Activated B cell treated with CpG ODN at 0.5 μM for 24 hours (primary cell): ENCODE measurements at regions of chr16 and their contacts with region 1.

Region 1: GRCh38 chr16:25014500-25015147 is 545 bp downstream of the ARHGAP17 start:
- DNase-seq: peak; percentile 35
- ATAC-seq: peak; percentile 14
- H3K4me3 Mint-ChIP-seq: peak overlapping the region; percentile 92
- H3K27ac Mint-ChIP-seq: peak overlapping the region; percentile 85
- H3K4me1 Mint-ChIP-seq: peaks cover 86% of the 10 kb centered on the region
- H3K27me3 Mint-ChIP-seq: no peaks in the 10 kb centered on the region
- CTCF ChIP-seq: no peak

Region 2: DNA sequence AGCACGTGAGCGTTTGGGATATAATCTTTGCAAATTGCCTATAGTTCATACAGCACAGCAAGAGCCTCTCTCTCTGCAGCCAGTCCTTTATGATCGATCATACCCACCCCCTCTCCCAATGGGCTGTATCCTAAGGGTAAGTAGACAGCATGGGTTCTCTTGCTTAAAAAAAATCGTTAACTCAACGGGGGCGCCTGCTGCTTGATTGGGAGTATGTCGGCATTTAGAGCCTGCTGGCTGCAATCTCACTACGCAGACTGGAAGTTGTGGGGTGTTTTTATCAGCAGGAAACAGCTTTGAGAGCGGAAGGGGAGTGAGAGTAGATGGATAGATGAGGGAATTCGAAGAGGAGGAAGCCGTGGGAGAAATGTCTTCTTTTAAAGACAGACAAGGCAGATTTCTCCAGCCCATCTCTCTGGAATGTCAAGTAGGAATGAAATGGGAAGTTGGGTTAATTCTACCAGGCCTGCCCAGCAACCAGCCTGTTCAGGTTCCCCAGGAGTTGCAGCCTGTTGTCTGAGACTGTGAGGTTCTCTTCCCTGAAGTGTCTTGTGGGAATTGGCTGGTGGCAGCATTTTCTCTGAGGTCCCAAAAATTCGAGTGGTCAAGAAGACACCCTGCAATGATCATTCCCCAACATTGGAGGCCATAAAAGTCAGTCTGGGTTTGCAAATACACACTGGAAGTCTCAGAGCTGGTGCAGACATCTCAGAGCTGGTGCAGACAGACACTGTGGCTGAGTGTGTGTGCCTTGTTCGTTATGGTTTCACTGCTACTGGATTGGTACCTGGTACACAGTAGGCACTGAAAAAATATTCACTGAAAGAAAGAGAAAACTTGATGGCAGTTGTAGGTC is 1113.2 kb before region 1 on chr16:
- CTCF ChIA-PET with region 1: no interaction called
- POLR2A ChIA-PET with region 1: no interaction called
- intact Hi-C with region 1: no loop called
- DNase-seq: no peak
- ATAC-seq: no peak
- H3K4me3 Mint-ChIP-seq: peak overlapping the region; percentile 29
- H3K27ac Mint-ChIP-seq: peak overlapping the region; percentile 77
- H3K4me1 Mint-ChIP-seq: peaks cover 91% of the 10 kb centered on the region
- H3K27me3 Mint-ChIP-seq: no peaks in the 10 kb centered on the region
- CTCF ChIP-seq: no peak

Region 3: DNA sequence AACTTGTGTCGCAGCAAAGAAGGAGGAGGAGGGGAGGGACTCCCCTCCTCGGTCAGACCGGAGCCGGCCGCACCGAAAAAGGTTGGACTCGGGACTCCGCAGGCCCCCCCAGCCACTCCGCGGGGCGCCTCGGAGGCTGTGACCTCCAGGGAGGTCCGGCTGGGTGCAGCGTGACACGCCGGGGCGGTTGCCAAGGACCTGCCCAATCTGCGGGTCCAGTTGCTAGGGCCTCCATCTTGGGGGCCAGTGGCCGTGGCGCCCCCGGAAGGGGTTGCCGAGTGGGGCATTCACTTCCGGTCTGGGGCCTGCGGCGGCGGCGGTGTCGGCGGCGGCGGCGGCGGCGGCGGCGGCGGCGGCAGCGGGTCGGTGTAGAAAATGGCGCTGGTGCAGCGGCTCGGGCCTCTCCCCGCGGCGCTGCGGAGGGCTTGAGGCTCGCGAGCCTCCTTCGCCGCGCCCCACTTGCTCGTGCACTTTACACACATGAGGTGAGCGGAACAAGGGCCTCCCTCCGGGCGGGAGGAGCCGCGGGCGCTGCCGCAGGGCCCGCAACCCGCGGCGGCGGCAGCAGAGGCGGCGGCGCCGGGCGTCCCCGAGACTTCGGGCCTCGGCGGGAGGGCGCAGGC is 285.2 kb before region 1 on chr16 and contains the start of gene TNRC6A:
- CTCF ChIA-PET with region 1: no interaction called
- POLR2A ChIA-PET with region 1: no interaction called
- intact Hi-C with region 1: no loop called
- DNase-seq: peak; percentile 90
- ATAC-seq: peak; percentile 79
- H3K4me3 Mint-ChIP-seq: peak within 1 kb of the TSS; percentile 99
- H3K27ac Mint-ChIP-seq: peak within 1 kb of the TSS; percentile 97
- H3K4me1 Mint-ChIP-seq: peaks cover 38% of the 10 kb centered on the region
- H3K27me3 Mint-ChIP-seq: no peaks in the 10 kb centered on the region
- CTCF ChIP-seq: no peak
- total RNA-seq, gene TNRC6A: 57.9 and 68.5 TPM in 2 replicates

Region 4: DNA sequence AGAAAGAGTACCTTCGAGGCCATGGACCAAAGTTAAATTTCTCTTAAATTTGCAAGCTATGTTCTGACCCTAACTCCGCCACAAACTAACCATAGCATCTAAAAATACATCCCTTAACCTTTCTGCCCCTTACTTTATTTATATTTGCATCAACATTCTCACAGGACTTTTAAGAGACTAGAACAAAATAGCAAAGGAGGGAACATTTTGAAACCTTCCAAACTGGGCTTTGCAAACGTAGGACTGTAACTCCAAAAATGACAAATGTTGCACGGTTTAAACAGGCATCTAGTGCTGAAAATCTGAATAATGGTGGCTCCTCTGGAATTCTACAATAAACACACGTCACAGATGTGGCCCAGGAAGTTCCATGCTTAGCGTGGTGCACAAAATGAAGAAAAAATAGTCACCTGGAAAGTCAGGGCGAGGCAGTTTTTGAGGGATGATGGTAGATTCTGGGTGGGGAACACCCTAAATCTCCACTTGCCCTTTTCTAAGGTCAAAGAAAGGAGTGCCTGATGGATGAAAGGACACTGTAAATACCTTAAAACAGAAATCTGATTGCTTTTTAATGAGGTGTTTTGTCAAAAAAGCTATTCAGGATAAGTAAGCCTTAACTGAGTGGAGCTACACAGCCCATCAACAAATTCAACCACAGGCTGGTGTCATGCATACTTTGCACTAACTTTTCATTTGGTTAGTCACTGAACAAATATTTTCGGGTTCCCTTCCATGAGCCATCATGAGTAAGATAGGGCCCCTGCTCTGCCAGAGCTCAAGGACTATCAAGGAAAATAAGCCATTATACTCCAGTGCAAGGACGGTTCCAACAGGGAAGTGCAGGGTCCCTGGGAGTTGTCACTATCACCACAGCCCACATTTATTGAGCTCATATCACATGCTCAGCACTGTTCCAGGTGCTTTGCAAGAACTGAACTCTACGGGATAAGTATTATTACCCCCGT is 20.6 kb before region 1 on chr16:
- CTCF ChIA-PET with region 1: no interaction called
- POLR2A ChIA-PET with region 1: interaction called, 13 read pairs
- intact Hi-C with region 1: loop called (anchors 1 kb)
- DNase-seq: no peak
- ATAC-seq: no peak
- H3K4me3 Mint-ChIP-seq: peak overlapping the region; percentile 36
- H3K27ac Mint-ChIP-seq: peak overlapping the region; percentile 81
- H3K4me1 Mint-ChIP-seq: peaks cover 97% of the 10 kb centered on the region
- H3K27me3 Mint-ChIP-seq: no peaks in the 10 kb centered on the region
- CTCF ChIP-seq: no peak

Region 5: GRCh38 chr16:25038239-25038954 is 23.8 kb after region 1 on chr16:
- CTCF ChIA-PET with region 1: interaction called, 4 read pairs
- POLR2A ChIA-PET with region 1: interaction called, 58 read pairs
- intact Hi-C with region 1: no loop called
- DNase-seq: no peak
- ATAC-seq: peak; percentile 51
- H3K4me3 Mint-ChIP-seq: no peak overlapping the region
- H3K27ac Mint-ChIP-seq: peak overlapping the region; percentile 74
- H3K4me1 Mint-ChIP-seq: peaks cover 54% of the 10 kb centered on the region
- H3K27me3 Mint-ChIP-seq: no peaks in the 10 kb centered on the region
- CTCF ChIP-seq: no peak

Region 6: GRCh38 chr16:25051406-25052150 is 37.0 kb after region 1 on chr16:
- CTCF ChIA-PET with region 1: interaction called, 5 read pairs
- POLR2A ChIA-PET with region 1: interaction called, 80 read pairs
- intact Hi-C with region 1: loop called (anchors 1 kb)
- DNase-seq: no peak
- ATAC-seq: no peak
- H3K4me3 Mint-ChIP-seq: no peak overlapping the region
- H3K27ac Mint-ChIP-seq: peak overlapping the region; percentile 54
- H3K4me1 Mint-ChIP-seq: peaks cover 49% of the 10 kb centered on the region
- H3K27me3 Mint-ChIP-seq: no peaks in the 10 kb centered on the region
- CTCF ChIP-seq: no peak

Region 7: GRCh38 chr16:25066747-25067631 is 52.4 kb after region 1 on chr16:
- CTCF ChIA-PET with region 1: no interaction called
- POLR2A ChIA-PET with region 1: interaction called, 24 read pairs
- intact Hi-C with region 1: no loop called
- DNase-seq: peak; percentile 78
- ATAC-seq: peak; percentile 94
- H3K4me3 Mint-ChIP-seq: peak overlapping the region; percentile 90
- H3K27ac Mint-ChIP-seq: peak overlapping the region; percentile 90
- H3K4me1 Mint-ChIP-seq: peaks cover 55% of the 10 kb centered on the region
- H3K27me3 Mint-ChIP-seq: no peaks in the 10 kb centered on the region
- CTCF ChIP-seq: no peak